Dorsolateral prefrontal cortex (tissue), 120 donors: ENCODE measurements at regions of chr6 and their contacts with region 1.

Region 1: DNA sequence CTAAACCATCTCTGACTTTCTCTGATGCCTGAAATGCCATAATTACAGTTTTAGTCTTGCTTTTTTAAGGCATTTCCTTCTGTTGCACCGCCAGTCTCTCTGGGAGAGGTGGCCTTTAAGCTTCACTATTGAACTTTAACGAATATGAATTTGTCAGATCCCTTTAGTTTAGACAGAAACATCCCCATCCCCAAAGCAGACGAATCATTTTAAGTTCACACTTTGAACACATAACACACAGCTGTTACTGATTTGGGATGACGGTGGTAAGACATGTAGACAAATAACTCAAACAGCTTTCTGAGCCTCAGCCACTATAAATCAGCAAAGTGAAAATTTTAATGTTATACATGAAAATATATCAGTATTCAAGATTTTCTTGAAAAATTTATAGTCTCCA is 7.2 kb upstream of the IPCEF1 start:
- DNase-seq: no peak
- H3K4me3 ChIP-seq: no peak overlapping the region
- H3K27ac ChIP-seq: no peak overlapping the region
- H3K27me3 ChIP-seq: peaks cover 0 to 3% (median 0%) of the 10 kb centered on the region in 45 donors
- CTCF ChIP-seq: no peak

Region 2: GRCh38 chr6:154306696-154307095 is 57.1 kb before region 1 on chr6:
- intact Hi-C with region 1: loop called in 1 of 2 experiments (anchors 5 kb)
- DNase-seq: no peak
- H3K4me3 ChIP-seq: no peak overlapping the region
- H3K27ac ChIP-seq: no peak overlapping the region
- H3K27me3 ChIP-seq: peaks cover 0 to 8% (median 0%) of the 10 kb centered on the region in 45 donors
- CTCF ChIP-seq: no peak